CD4-positive, alpha-beta memory T cell (primary cell): ENCODE measurements at regions of chr4 and their contacts with region 1.

Region 1: GRCh38 chr4:48340965-48341775 is at the start of gene SLAIN2:
- DNase-seq: peak; percentile 95 to 100 (median 97)
- H3K4me3 ChIP-seq: peak within 1 kb of the TSS; percentile 68 to 90
- H3K4me3 Mint-ChIP-seq: peak within 1 kb of the TSS; percentile 96 to 98 (median 97)
- H3K27ac ChIP-seq: peak within 1 kb of the TSS; percentile 89
- H3K27ac Mint-ChIP-seq: peak within 1 kb of the TSS; percentile 97 to 100 (median 98)
- H3K4me1 ChIP-seq: peaks cover 52% of the 10 kb centered on the region
- H3K4me1 Mint-ChIP-seq: peaks cover 33 to 58% (median 42%) of the 10 kb centered on the region in 4 donors
- H3K27me3 ChIP-seq: no peaks in the 10 kb centered on the region
- H3K27me3 Mint-ChIP-seq: no peaks in the 10 kb centered on the region
- total RNA-seq, gene SLAIN2: 84.4 to 87.5 TPM

Region 2: GRCh38 chr4:47463235-47463956 is 877.8 kb before region 1 on chr4 and contains the start of gene COMMD8:
- CTCF ChIA-PET with region 1: no interaction called
- POLR2A ChIA-PET with region 1: no interaction called
- intact Hi-C with region 1: loop called (anchors 1 kb)
- DNase-seq: peak; percentile 96 to 98 (median 97)
- H3K4me3 ChIP-seq: peak within 1 kb of the TSS; percentile 48 to 92
- H3K4me3 Mint-ChIP-seq: peak within 1 kb of the TSS; percentile 88 to 92 (median 90)
- H3K27ac ChIP-seq: peak within 1 kb of the TSS; percentile 79
- H3K27ac Mint-ChIP-seq: peak within 1 kb of the TSS; percentile 90 to 99 (median 96)
- H3K4me1 ChIP-seq: peaks cover 24% of the 10 kb centered on the region
- H3K4me1 Mint-ChIP-seq: peaks cover 26 to 42% (median 36%) of the 10 kb centered on the region in 4 donors
- H3K27me3 ChIP-seq: no peaks in the 10 kb centered on the region
- H3K27me3 Mint-ChIP-seq: peaks cover 0 to 2% of the 10 kb centered on the region in 2 donors
- total RNA-seq, gene COMMD8: 14.6 to 18.3 TPM

Region 3: GRCh38 chr4:47674144-47674543 is 667.0 kb before region 1 on chr4:
- CTCF ChIA-PET with region 1: no interaction called
- POLR2A ChIA-PET with region 1: no interaction called
- intact Hi-C with region 1: no loop called
- DNase-seq: no peak
- H3K4me3 ChIP-seq: no peak overlapping the region
- H3K4me3 Mint-ChIP-seq: no peak overlapping the region
- H3K27ac ChIP-seq: no peak overlapping the region
- H3K27ac Mint-ChIP-seq: no peak overlapping the region
- H3K4me1 ChIP-seq: no peaks in the 10 kb centered on the region
- H3K4me1 Mint-ChIP-seq: no peaks in the 10 kb centered on the region
- H3K27me3 ChIP-seq: no peaks in the 10 kb centered on the region
- H3K27me3 Mint-ChIP-seq: peaks cover 0 to 8% of the 10 kb centered on the region in 2 donors

Region 4: DNA sequence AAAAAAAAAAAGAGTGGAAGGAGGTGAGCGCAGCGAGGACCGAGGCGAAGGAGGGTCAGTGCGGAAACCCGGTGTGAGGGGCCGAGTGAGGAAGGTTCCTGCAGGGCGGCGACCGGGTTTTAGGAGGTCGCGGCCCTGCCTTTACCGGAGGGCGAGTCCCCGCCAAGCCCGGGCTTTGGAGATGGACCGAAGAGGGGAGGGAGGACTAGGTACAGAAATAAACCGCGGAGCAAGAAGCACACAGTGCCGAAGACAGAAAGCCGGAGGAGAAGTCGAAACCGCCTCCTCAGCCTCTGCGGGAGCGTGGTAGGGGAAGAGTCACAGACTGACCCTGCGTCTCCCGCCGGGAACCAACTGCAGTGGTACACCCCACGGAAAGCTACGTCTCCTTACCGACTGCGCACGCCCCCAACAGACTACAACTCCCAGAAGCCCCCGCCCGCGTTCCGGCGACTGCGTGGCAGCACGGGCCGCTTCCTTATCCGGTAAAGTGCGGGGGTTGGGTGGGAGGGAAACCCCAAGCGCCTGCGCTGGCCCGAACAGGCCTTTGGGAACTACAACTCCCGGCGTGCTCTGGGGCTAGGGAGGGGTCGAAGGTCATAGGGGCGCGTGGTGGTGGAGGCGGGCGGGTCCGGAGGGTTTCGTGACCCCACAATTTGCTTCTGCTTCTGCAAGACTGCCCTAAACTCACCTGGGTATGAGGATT is 426.8 kb before region 1 on chr4 and contains the start of gene NFXL1:
- CTCF ChIA-PET with region 1: no interaction called
- POLR2A ChIA-PET with region 1: interaction called, 3 read pairs
- intact Hi-C with region 1: loop called (anchors 1 kb)
- DNase-seq: peak; percentile 93 to 97 (median 94)
- H3K4me3 ChIP-seq: peak within 1 kb of the TSS; percentile 89 to 100
- H3K4me3 Mint-ChIP-seq: peak within 1 kb of the TSS; percentile 94 to 99 (median 98)
- H3K27ac ChIP-seq: peak within 1 kb of the TSS; percentile 75
- H3K27ac Mint-ChIP-seq: peak within 1 kb of the TSS; percentile 93 to 99 (median 96)
- H3K4me1 ChIP-seq: peaks cover 23% of the 10 kb centered on the region
- H3K4me1 Mint-ChIP-seq: peaks cover 22 to 41% (median 28%) of the 10 kb centered on the region in 4 donors
- H3K27me3 ChIP-seq: no peaks in the 10 kb centered on the region
- H3K27me3 Mint-ChIP-seq: no peaks in the 10 kb centered on the region
- total RNA-seq, gene NFXL1: 16.6 to 21.1 TPM

Region 5: DNA sequence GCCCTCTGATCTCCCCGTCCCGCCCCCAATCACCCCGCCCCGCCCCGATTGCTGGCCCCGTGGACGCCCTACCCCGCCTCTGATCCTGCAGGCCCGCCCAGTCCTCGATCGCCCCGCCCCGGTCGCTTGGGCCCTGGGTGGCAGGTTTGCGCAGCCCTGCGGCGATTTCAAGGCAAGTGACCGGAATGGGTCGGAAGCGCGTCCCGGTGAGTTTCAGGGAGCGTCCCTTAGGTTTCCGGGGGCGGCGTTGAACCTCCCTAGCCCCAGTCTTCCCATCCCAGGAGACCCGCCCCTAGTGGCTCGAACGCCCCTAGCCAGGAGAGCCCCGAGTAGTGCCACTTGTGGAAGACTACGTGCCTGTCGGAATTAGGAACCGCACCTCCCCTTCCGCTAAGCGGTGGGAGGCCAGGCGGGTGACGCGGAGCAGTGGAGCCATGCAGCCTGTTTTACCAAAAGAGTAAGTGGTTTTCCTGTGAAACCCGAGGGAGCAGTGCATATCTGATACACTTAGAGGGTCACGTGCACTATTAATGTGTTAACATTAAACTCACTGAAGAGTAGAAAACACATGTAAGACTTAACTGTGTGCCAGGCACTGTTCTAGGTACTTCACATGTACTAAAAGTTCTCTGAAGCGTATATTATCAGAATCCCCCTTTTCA is 71.2 kb before region 1 on chr4:
- CTCF ChIA-PET with region 1: interaction called, 3 read pairs
- POLR2A ChIA-PET with region 1: interaction called, 3 read pairs
- intact Hi-C with region 1: loop called (anchors 1 kb)
- DNase-seq: peak; percentile 74 to 86 (median 77)
- H3K4me3 ChIP-seq: peak overlapping the region; percentile 50 to 59
- H3K4me3 Mint-ChIP-seq: peak overlapping the region; percentile 91 to 98 (median 96)
- H3K27ac ChIP-seq: peak overlapping the region; percentile 48
- H3K27ac Mint-ChIP-seq: peak overlapping the region; percentile 82 to 93 (median 90)
- H3K4me1 ChIP-seq: peaks cover 14% of the 10 kb centered on the region
- H3K4me1 Mint-ChIP-seq: peaks cover 9 to 24% (median 10%) of the 10 kb centered on the region in 4 donors
- H3K27me3 ChIP-seq: no peaks in the 10 kb centered on the region
- H3K27me3 Mint-ChIP-seq: no peaks in the 10 kb centered on the region

Region 6: DNA sequence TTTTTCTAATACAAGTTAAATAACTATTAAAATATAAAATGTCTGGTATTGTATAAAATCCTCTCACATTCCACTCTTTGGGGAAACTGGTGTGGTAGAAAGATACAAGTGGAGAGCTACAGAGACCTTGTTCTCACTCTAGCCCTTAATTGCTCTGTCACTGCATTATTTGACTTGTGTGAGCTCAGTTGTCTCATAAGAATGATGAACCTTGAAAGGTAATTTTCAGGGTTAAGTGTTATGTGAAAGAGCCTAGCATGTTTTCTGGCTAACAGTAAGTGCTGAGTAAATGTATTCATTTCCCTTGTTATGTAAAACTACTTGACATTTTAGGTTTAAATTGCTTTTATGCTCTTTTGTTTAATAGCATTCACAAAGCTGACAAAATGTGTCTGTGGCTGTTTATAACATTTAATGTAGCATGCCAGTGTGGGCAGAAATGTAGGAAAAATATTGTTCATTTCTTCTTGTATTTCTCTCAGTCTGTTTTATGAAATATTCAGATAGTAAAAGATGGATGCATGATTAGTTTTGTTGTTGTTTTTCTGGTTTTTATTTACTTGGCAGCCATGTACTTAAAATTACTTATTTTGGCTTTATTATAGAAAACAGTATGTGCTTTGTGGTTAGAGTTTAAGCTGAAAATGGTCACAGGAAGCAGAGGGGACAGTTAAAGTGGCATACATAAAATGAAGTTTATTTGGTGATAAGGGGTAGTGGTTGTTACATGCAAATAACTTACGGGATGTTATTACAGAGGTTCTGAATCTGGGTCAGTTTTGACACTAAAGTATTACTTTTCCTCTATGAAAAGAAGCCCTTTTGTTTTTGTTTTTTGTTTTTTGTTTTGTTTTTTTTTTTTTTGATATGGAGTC is 29.3 kb after region 1 on chr4:
- CTCF ChIA-PET with region 1: no interaction called
- POLR2A ChIA-PET with region 1: interaction called, 14 read pairs
- intact Hi-C with region 1: no loop called
- DNase-seq: no peak
- H3K4me3 ChIP-seq: no peak overlapping the region
- H3K4me3 Mint-ChIP-seq: peak overlapping the region in 2 of 8 donors; percentile 0 to 2
- H3K27ac ChIP-seq: no peak overlapping the region
- H3K27ac Mint-ChIP-seq: peak overlapping the region in 5 of 7 donors; percentile 1 to 25 (median 5)
- H3K4me1 ChIP-seq: peaks cover 48% of the 10 kb centered on the region
- H3K4me1 Mint-ChIP-seq: peaks cover 43 to 57% (median 54%) of the 10 kb centered on the region in 4 donors
- H3K27me3 ChIP-seq: no peaks in the 10 kb centered on the region
- H3K27me3 Mint-ChIP-seq: no peaks in the 10 kb centered on the region

Region 7: GRCh38 chr4:48565362-48566033 is 224.3 kb after region 1 on chr4:
- CTCF ChIA-PET with region 1: no interaction called
- POLR2A ChIA-PET with region 1: no interaction called
- intact Hi-C with region 1: no loop called
- DNase-seq: no peak
- H3K4me3 ChIP-seq: no peak overlapping the region
- H3K4me3 Mint-ChIP-seq: no peak overlapping the region
- H3K27ac ChIP-seq: no peak overlapping the region
- H3K27ac Mint-ChIP-seq: no peak overlapping the region
- H3K4me1 ChIP-seq: no peaks in the 10 kb centered on the region
- H3K4me1 Mint-ChIP-seq: peaks cover 0 to 1% (median 0%) of the 10 kb centered on the region in 4 donors
- H3K27me3 ChIP-seq: no peaks in the 10 kb centered on the region
- H3K27me3 Mint-ChIP-seq: no peaks in the 10 kb centered on the region

Region 8: DNA sequence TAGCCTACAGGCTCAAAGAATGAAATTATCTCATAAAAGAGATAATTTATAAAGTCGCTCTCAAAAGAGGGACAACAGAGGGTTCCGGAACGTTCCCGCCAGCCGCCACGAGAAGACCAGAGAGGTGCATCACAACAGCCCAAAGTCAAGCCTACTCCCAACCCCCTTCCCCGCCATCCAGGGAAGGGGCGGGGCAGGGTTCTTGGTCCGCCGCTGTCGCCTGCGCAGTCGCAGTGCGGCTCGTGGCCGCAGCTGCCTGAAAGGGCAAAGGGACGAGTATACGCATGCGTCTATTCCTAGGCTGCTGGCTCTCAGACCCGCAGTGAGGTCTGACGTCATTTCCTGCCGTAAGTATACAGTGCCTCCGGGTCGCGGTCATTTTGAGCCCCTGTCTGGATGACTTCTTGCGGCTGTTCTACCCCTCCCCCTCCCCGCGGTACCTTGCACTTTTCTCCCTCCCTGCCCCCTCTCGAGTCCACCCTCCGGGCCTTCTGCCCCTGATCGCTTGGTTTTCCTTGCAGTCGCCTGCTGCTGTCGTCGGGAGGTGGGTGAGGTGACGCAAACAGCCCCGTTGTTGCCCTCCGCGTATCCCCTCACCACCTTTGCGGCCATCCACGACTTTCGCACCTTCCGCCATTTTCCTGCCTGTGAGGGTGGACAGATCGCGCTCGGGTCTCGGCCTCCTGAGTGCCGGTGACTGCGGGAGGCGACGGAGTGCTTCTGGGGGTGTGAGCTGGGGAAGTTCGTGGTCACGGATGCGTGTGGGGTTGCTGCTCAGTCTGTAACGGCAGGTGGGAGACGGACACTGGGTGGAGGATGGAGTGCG is 489.7 kb after region 1 on chr4 and contains the start of gene OCIAD1:
- CTCF ChIA-PET with region 1: no interaction called
- POLR2A ChIA-PET with region 1: interaction called, 3 read pairs
- intact Hi-C with region 1: loop called (anchors 2 kb)
- DNase-seq: peak; percentile 91 to 99 (median 96)
- H3K4me3 ChIP-seq: peak within 1 kb of the TSS; percentile 92 to 100
- H3K4me3 Mint-ChIP-seq: peak within 1 kb of the TSS; percentile 100
- H3K27ac ChIP-seq: peak within 1 kb of the TSS; percentile 98
- H3K27ac Mint-ChIP-seq: peak within 1 kb of the TSS; percentile 99 to 100 (median 100)
- H3K4me1 ChIP-seq: peaks cover 25% of the 10 kb centered on the region
- H3K4me1 Mint-ChIP-seq: peaks cover 15 to 35% (median 28%) of the 10 kb centered on the region in 4 donors
- H3K27me3 ChIP-seq: no peaks in the 10 kb centered on the region
- H3K27me3 Mint-ChIP-seq: no peaks in the 10 kb centered on the region
- total RNA-seq, gene OCIAD1: 110 to 124 TPM